HepG2 (cell line): ENCODE measurements at regions of chr19 and their contacts with region 1.

Region 1: DNA sequence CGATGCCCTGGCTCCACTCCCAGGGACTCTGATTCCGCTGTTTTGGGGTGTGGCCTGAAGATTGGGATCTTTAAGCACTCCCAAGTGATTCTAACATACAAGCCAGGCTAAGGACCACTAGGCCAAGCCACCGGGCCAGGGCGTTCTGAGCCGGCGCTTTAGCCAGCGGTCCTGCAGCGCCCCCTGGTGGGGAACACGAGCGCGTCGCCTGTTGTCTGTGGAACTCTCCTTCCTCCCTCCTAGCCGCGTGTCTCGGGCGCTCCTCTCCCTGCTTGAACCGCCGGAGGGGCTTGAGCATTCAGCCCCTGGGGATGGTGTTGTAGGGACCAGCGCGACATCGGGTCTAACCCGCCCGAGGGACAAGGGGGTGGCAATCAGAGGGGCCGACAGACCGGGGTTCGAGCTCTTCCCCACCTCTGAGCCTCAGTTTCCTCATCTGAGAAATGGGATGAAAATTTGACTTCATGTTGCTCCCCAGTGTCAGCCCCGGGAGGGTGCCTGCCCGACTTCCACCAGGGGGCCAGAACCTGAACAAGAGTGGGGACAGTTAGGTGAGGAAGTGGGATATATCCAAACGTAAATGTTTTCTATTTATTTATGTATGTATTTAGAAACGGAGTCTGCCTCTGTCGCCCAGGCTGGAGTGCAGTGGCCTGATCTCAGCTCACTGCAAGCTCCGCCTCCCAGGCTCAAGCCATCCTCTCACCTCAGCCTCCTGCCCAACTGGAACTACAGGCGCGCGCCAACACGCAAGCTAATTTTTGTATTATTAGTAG is 18.0 kb upstream of the PNMA8B start:
- DNase-seq: peak; percentile 44
- ATAC-seq: peak; percentile 91
- H3K4me3 ChIP-seq: no peak overlapping the region
- H3K27ac ChIP-seq: no peak overlapping the region
- H3K4me1 ChIP-seq: no peaks in the 10 kb centered on the region
- H3K27me3 ChIP-seq: no peaks in the 10 kb centered on the region
- CTCF ChIP-seq: peak; percentile 97
- EP300 ChIP-seq: no peak
- POLR2A ChIP-seq: no peak
- RAD21 ChIP-seq: peak; percentile 91

Region 2: GRCh38 chr19:46288896-46289588 is 224.6 kb before region 1 on chr19:
- CTCF ChIA-PET with region 1: no interaction called
- POLR2A ChIA-PET with region 1: no interaction called
- in situ Hi-C with region 1: no loop called
- intact Hi-C with region 1: loop called (anchors 10 kb)
- DNase-seq: peak; percentile 36
- ATAC-seq: no peak; the same call in 2 of the 3 replicates
- H3K4me3 ChIP-seq: no peak overlapping the region
- H3K27ac ChIP-seq: no peak overlapping the region
- H3K4me1 ChIP-seq: peaks cover 9% of the 10 kb centered on the region; the same call in 1 of the 2 replicates
- H3K27me3 ChIP-seq: no peaks in the 10 kb centered on the region; a peak in 1 of 5 replicates
- CTCF ChIP-seq: no peak
- EP300 ChIP-seq: no peak
- POLR2A ChIP-seq: no peak
- RAD21 ChIP-seq: no peak

Region 3: DNA sequence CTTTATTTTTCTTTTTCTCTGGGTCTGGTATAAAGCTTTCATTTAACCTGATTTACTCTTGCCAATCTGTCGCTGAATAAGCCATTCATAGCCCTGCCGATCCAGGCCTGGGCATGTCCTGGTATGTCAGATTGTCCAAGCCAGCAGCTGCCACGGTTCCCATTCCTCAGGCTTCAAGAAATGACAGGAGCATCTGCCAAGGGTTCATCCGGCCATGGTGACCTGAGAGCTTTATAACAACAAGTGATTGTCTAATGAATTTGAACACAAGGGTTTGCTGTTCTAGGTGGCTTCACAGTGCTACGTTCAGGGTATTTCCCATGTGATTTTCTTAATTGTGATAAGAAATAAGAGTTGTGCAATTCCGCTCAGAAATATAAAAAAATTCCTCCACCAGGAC is 62.3 kb before region 1 on chr19:
- CTCF ChIA-PET with region 1: no interaction called
- POLR2A ChIA-PET with region 1: no interaction called
- in situ Hi-C with region 1: no loop called
- intact Hi-C with region 1: no loop called
- DNase-seq: no peak
- ATAC-seq: no peak
- H3K4me3 ChIP-seq: no peak overlapping the region
- H3K27ac ChIP-seq: no peak overlapping the region
- H3K4me1 ChIP-seq: no peaks in the 10 kb centered on the region
- H3K27me3 ChIP-seq: no peaks in the 10 kb centered on the region
- CTCF ChIP-seq: no peak
- EP300 ChIP-seq: no peak
- POLR2A ChIP-seq: no peak
- RAD21 ChIP-seq: no peak

Region 4: GRCh38 chr19:46537136-46538097 is 23.8 kb after region 1 on chr19:
- CTCF ChIA-PET with region 1: no interaction called
- POLR2A ChIA-PET with region 1: no interaction called
- in situ Hi-C with region 1: no loop called
- intact Hi-C with region 1: no loop called
- DNase-seq: no peak
- ATAC-seq: peak; percentile 77
- H3K4me3 ChIP-seq: no peak overlapping the region
- H3K27ac ChIP-seq: no peak overlapping the region
- H3K4me1 ChIP-seq: no peaks in the 10 kb centered on the region
- H3K27me3 ChIP-seq: peaks cover 0 to 6% of the 10 kb centered on the region in 2 experiments; a peak in 2 of 5 replicates
- CTCF ChIP-seq: peak; percentile 62
- EP300 ChIP-seq: no peak
- POLR2A ChIP-seq: no peak
- RAD21 ChIP-seq: no peak

Region 5: GRCh38 chr19:46571531-46571930 is 57.9 kb after region 1 on chr19:
- CTCF ChIA-PET with region 1: no interaction called
- POLR2A ChIA-PET with region 1: no interaction called
- in situ Hi-C with region 1: no loop called
- intact Hi-C with region 1: no loop called
- DNase-seq: peak; percentile 64
- ATAC-seq: peak; percentile 89
- H3K4me3 ChIP-seq: no peak overlapping the region
- H3K27ac ChIP-seq: no peak overlapping the region
- H3K4me1 ChIP-seq: peaks cover 13% of the 10 kb centered on the region
- H3K27me3 ChIP-seq: peaks cover 0 to 2% of the 10 kb centered on the region in 2 experiments; a peak in 1 of 5 replicates
- CTCF ChIP-seq: peak; percentile 27
- EP300 ChIP-seq: no peak
- POLR2A ChIP-seq: no peak
- RAD21 ChIP-seq: no peak

Region 6: GRCh38 chr19:46614114-46614722 is 100.6 kb after region 1 on chr19:
- CTCF ChIA-PET with region 1: no interaction called
- POLR2A ChIA-PET with region 1: no interaction called
- in situ Hi-C with region 1: no loop called
- intact Hi-C with region 1: no loop called
- DNase-seq: peak; percentile 61
- ATAC-seq: peak; percentile 82
- H3K4me3 ChIP-seq: peak overlapping the region in 1 of 3 experiments; percentile 13; a peak in 1 of 6 replicates
- H3K27ac ChIP-seq: no peak overlapping the region
- H3K4me1 ChIP-seq: peaks cover 14% of the 10 kb centered on the region
- H3K27me3 ChIP-seq: peaks cover 0 to 13% of the 10 kb centered on the region in 2 experiments; a peak in 3 of 5 replicates
- CTCF ChIP-seq: peak; percentile 88
- EP300 ChIP-seq: no peak
- POLR2A ChIP-seq: no peak
- RAD21 ChIP-seq: peak; percentile 72